Endothelial cell of umbilical vein (primary cell): ENCODE measurements at regions of chr1 and their contacts with region 1.

Region 1: DNA sequence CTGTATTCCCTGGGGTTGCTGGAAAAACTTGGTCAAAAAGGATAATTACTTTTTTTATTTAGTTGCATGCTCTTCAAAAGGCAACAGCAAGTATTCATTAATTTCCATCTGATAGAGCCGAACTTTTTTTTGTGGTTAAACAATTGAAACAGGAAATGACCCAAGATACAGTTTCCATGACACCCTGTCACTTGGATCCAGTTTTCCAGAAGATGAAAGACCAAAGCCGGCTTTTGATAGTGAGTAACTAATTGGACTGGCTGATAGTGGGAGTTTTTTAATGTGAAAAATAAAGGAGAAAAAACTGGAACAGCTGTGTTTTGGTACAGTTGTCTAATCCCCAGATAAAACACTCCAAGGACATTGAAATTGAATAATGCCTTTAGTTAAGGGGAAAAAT is 33.0 kb downstream of the CACHD1 start:
- DNase-seq: peak; percentile 85
- H3K4me3 ChIP-seq: no peak overlapping the region
- H3K27ac ChIP-seq: no peak overlapping the region
- H3K4me1 ChIP-seq: peaks cover 20% of the 10 kb centered on the region
- H3K27me3 ChIP-seq: no peaks in the 10 kb centered on the region
- CTCF ChIP-seq: no peak
- POLR2A ChIP-seq: no peak

Region 2: GRCh38 chr1:64282354-64282753 is 220.6 kb before region 1 on chr1:
- CTCF ChIA-PET with region 1: no interaction called
- POLR2A ChIA-PET with region 1: no interaction called
- dilution Hi-C with region 1: no loop called
- intact Hi-C with region 1: no loop called
- DNase-seq: no peak
- H3K4me3 ChIP-seq: no peak overlapping the region
- H3K27ac ChIP-seq: no peak overlapping the region
- H3K4me1 ChIP-seq: no peaks in the 10 kb centered on the region
- H3K27me3 ChIP-seq: no peaks in the 10 kb centered on the region
- CTCF ChIP-seq: no peak
- POLR2A ChIP-seq: no peak

Region 3: DNA sequence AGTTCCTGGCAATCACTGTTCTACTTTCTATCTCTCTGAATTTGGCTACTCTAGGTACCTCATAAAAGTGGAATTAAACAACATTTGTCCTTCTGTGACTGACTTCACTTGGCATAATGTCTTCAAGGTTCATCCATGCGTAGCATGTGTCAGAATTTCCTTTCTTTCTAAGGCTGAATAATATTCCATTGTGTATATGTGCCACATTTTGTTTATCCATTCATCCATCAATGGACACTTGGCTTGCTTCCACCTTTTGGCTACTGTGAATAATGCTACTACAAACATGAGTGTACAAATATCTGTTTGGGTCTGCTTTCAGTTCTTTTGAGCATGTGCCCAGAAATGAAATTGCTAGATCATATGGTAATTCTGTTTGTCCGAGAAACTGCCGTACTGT is 18.3 kb before region 1 on chr1:
- CTCF ChIA-PET with region 1: interaction called, 3 read pairs
- POLR2A ChIA-PET with region 1: no interaction called
- dilution Hi-C with region 1: no loop called
- intact Hi-C with region 1: loop called (anchors 2 kb)
- DNase-seq: peak; percentile 82
- H3K4me3 ChIP-seq: no peak overlapping the region
- H3K27ac ChIP-seq: no peak overlapping the region
- H3K4me1 ChIP-seq: peaks cover 35% of the 10 kb centered on the region
- H3K27me3 ChIP-seq: no peaks in the 10 kb centered on the region
- CTCF ChIP-seq: no peak
- POLR2A ChIP-seq: no peak

Region 4: GRCh38 chr1:64515427-64515826 is 12.5 kb after region 1 on chr1:
- CTCF ChIA-PET with region 1: interaction called, 8 read pairs
- POLR2A ChIA-PET with region 1: interaction called, 3 read pairs
- dilution Hi-C with region 1: no loop called
- intact Hi-C with region 1: loop called (anchors 2 kb)
- DNase-seq: no peak
- H3K4me3 ChIP-seq: no peak overlapping the region
- H3K27ac ChIP-seq: no peak overlapping the region
- H3K4me1 ChIP-seq: peaks cover 31% of the 10 kb centered on the region
- H3K27me3 ChIP-seq: no peaks in the 10 kb centered on the region
- CTCF ChIP-seq: no peak
- POLR2A ChIP-seq: no peak